ENCODE measurements at regions of chr5 and their contacts with region 1.

Region 1: DNA sequence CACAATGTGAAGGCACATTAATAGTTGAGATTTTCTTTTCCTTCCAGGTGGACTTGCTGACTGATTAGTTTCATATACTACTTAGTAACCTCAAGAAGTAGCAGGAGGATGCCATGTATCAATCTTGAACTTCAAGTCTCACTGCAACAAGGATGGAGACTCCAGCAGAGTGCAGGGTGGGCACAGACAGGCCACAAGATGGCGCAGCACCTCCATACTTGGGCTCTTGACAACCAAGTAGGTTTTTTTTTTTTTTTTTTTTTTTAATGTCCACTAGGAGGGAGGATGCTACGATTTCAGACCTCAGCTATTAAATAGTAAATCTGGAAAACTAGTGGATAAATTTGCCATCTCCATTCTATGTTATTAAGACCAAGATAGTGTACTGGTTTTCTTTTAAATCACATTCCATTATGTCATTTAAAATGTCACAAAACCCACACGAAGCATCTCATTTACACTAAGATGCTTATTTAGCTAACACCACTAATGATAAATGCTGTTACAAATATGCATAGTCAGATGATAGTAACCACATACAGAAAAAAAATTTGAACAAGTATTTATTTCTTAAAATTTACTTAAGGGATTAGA is 58.6 kb downstream of the IL6ST start:
- H3K4me3 ChIP-seq: no peak overlapping the region
- H3K27ac ChIP-seq: no peak overlapping the region
- H3K4me1 ChIP-seq: no peaks in the 10 kb centered on the region
- CTCF ChIP-seq: peak; percentile 86

Region 2: GRCh38 chr5:55923177-55923771 is 12.9 kb before region 1 on chr5:
- CTCF ChIA-PET with region 1: interaction called, 14 read pairs
- POLR2A ChIA-PET with region 1: no interaction called
- H3K4me3 ChIP-seq: no peak overlapping the region
- H3K27ac ChIP-seq: no peak overlapping the region
- H3K4me1 ChIP-seq: no peaks in the 10 kb centered on the region
- CTCF ChIP-seq: no peak

Region 3: GRCh38 chr5:56200856-56201666 is 264.9 kb after region 1 on chr5:
- CTCF ChIA-PET with region 1: interaction called, 110 read pairs
- POLR2A ChIA-PET with region 1: interaction called, 3 read pairs
- H3K4me3 ChIP-seq: no peak overlapping the region
- H3K27ac ChIP-seq: no peak overlapping the region
- H3K4me1 ChIP-seq: no peaks in the 10 kb centered on the region
- CTCF ChIP-seq: peak; percentile 88

Region 4: DNA sequence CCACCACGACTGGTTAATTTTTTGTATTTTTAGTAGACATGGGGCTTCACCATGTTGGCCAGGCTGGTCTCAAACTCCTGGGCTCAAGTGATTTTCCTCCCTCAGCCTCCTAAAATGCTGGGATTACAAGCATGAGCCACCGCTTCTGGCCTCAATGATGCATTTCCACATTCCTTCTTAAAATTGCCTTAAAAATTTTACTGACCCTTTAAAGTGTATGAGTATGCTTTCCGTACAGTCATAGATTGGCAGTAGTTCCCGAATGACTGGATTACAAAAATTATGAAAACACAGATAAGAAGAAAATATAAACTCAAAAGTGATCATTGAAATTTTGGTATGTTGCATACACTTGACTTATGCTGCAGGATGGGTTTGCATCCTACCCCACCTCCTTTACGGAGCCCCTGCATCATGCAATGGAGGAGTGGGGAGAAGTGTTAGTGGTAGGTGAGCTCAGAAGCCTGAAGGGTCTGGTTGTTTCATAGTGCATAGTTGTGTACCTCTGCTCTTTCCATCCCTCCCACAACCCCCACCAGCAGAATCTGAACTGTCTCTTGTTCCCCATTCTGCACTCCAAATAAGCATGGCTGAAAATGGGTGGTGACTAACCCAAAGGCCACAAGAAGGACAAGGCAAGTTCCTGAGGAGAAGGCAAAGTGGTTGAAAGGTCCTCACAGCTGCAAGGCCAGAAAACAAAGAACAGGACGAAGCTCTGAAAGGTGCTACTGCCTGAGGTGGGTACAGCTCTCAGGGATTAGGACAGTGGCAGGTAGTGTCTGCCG is 270.1 kb after region 1 on chr5:
- CTCF ChIA-PET with region 1: interaction called, 110 read pairs
- POLR2A ChIA-PET with region 1: interaction called, 3 read pairs
- H3K4me3 ChIP-seq: no peak overlapping the region
- H3K27ac ChIP-seq: no peak overlapping the region
- H3K4me1 ChIP-seq: no peaks in the 10 kb centered on the region
- CTCF ChIP-seq: no peak

Region 5: DNA sequence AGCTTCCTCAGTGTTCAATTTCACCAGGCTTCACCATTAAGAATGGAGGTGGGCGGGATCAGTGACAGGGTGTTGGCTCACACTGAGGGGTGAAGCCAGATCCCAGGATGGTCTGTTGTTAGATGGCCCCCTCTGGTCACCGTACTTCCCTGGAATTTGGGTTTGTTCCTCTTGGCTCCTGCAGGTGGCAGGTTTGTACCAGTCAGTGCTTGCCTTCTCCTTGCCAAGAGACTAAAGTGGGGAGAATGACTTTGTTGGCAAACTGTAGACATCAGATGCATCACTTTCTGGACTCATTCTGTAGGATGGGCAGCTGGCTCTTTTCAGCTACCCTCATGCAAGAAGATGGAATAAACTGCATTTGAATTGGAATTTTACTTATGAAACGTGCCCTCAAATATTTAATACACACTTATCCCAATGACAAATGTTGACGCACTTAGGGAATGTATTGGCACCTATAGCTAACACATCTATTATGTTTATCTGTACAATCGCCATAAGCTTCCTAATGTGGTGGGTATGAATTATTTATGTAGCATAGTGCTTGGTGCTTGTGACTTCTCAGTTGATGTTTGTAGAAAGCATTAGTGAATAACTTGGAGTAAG is 328.3 kb after region 1 on chr5:
- CTCF ChIA-PET with region 1: interaction called, 32 read pairs
- POLR2A ChIA-PET with region 1: no interaction called
- H3K4me3 ChIP-seq: no peak overlapping the region
- H3K27ac ChIP-seq: no peak overlapping the region
- H3K4me1 ChIP-seq: no peaks in the 10 kb centered on the region
- CTCF ChIP-seq: peak; percentile 69

Measured in HEK293 (cell line).